ENCODE measurements at regions of chr5 and their contacts with region 1.

Region 1: DNA sequence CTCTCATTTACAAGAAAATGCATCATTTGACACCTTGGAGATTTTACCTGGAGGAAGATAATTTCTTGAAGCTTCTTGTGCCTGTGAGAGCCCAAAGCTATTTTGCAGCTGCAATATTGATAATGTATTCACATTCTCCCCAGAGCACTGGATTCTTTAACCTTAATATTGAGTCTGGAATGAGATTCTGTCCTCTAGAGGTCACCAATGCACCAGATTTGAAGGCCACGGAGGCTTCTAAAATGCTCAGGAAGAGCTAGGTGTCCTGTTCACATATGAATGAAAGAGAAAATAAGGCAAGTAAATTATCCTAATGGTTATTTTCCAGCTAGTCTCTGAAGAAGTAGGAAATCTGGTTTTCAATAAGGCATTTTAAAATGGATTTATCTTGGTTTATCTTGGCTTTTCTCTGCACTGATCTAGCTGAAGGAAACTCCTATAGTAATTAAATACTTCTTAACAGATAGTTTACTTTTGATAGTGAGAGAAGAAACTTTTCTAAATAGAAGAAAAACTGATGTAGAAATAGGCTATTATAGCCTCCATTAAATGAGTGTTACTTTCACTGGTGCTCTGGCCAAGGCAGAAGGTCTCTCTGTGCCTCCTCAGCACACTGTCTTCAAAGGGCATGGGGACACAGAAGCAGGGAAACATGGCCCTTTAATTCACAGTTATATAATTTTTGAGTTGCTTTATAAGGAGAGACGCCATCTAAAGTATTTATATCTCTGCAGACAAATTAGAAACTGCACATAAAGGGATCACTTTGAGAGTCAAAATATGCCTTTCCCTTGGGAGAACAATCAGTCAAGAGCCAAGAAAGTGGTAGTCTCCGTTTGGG is 297.0 kb upstream of the ACTBL2 start:
- DNase-seq: peak; percentile 42
- H3K4me3 ChIP-seq: peak overlapping the region in 1 of 2 experiments; percentile 29; a peak in 1 of 4 replicates
- H3K27ac ChIP-seq: peak overlapping the region; percentile 34 to 39
- H3K4me1 ChIP-seq: peaks cover 6 to 9% of the 10 kb centered on the region in 2 experiments; a peak in 3 of 4 replicates
- H3K27me3 ChIP-seq: no peaks in the 10 kb centered on the region
- CTCF ChIP-seq: peak; percentile 82
- EP300 ChIP-seq: no peak
- RAD21 ChIP-seq: peak; percentile 95

Region 2: GRCh38 chr5:57303985-57304384 is 475.6 kb before region 1 on chr5:
- CTCF ChIA-PET with region 1: interaction called, 51 read pairs
- POLR2A ChIA-PET with region 1: no interaction called
- DNase-seq: no peak
- H3K4me3 ChIP-seq: no peak overlapping the region
- H3K27ac ChIP-seq: no peak overlapping the region
- H3K4me1 ChIP-seq: peaks cover 0 to 2% of the 10 kb centered on the region in 2 experiments; a peak in 1 of 4 replicates
- H3K27me3 ChIP-seq: no peaks in the 10 kb centered on the region
- CTCF ChIP-seq: no peak
- EP300 ChIP-seq: no peak
- RAD21 ChIP-seq: 0 out of 2 replicates have a peak, but pooled peaks have one; percentile 12

Region 3: DNA sequence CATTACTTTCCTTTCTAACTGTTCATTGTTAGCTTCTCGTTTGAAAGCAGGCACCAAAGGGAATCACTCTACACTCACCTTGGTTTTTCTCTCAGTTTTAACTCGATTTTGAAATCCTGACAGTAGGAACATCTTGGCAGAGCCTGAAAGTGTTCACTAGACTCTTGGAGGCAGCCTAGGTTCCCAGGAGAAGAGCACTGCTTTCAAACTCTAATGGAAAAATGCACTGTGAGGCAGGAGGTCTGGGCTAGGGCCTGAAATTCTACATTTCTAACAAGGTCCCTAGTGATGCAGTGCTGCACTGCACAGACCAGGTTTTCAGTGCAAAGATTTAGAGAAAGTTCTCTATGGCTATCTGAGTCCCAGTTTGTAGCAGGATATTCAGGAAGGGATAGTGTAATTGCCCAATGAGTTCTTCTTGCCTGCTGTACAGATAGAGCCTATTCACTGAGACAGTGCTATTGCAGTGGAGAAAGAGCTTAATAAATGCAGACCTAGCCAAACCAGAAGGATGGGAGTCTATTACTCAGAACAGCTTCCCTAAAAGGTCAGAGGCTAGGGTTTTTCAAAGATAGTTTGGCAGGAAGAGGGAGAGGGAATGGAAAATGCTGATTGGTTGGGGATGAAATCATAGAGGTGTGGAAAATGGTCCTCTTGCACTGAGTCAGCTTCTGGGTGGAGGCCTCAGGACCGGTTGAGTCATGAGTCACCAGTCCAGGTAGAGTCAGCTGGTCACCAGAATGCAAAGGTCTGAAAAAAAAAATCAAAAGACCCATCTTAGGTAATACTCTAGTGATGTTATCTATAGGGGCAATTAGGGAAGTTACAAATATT is 451.8 kb before region 1 on chr5:
- CTCF ChIA-PET with region 1: no interaction called
- POLR2A ChIA-PET with region 1: no interaction called
- DNase-seq: no peak
- H3K4me3 ChIP-seq: no peak overlapping the region
- H3K27ac ChIP-seq: no peak overlapping the region
- H3K4me1 ChIP-seq: no peaks in the 10 kb centered on the region
- H3K27me3 ChIP-seq: no peaks in the 10 kb centered on the region
- CTCF ChIP-seq: no peak
- EP300 ChIP-seq: no peak
- RAD21 ChIP-seq: no peak

Region 4: GRCh38 chr5:57650360-57651069 is 129.1 kb before region 1 on chr5:
- CTCF ChIA-PET with region 1: interaction called, 18 read pairs
- POLR2A ChIA-PET with region 1: no interaction called
- DNase-seq: peak; percentile 5
- H3K4me3 ChIP-seq: no peak overlapping the region; a peak in 1 of 4 replicates
- H3K27ac ChIP-seq: no peak overlapping the region
- H3K4me1 ChIP-seq: no peaks in the 10 kb centered on the region
- H3K27me3 ChIP-seq: no peaks in the 10 kb centered on the region
- CTCF ChIP-seq: peak; percentile 65
- EP300 ChIP-seq: no peak
- RAD21 ChIP-seq: peak; percentile 63

Region 5: GRCh38 chr5:57878301-57878722 is 98.7 kb after region 1 on chr5:
- CTCF ChIA-PET with region 1: interaction called, 10 read pairs
- POLR2A ChIA-PET with region 1: no interaction called
- DNase-seq: no peak
- H3K4me3 ChIP-seq: no peak overlapping the region
- H3K27ac ChIP-seq: no peak overlapping the region
- H3K4me1 ChIP-seq: no peaks in the 10 kb centered on the region
- H3K27me3 ChIP-seq: no peaks in the 10 kb centered on the region
- CTCF ChIP-seq: no peak
- EP300 ChIP-seq: no peak
- RAD21 ChIP-seq: no peak

Region 6: GRCh38 chr5:58450811-58451629 is 671.4 kb after region 1 on chr5:
- CTCF ChIA-PET with region 1: interaction called, 13 read pairs
- POLR2A ChIA-PET with region 1: no interaction called
- DNase-seq: no peak
- H3K4me3 ChIP-seq: no peak overlapping the region
- H3K27ac ChIP-seq: no peak overlapping the region; a peak in 1 of 4 replicates
- H3K4me1 ChIP-seq: no peaks in the 10 kb centered on the region; a peak in 1 of 4 replicates
- H3K27me3 ChIP-seq: no peaks in the 10 kb centered on the region
- CTCF ChIP-seq: no peak
- EP300 ChIP-seq: no peak
- RAD21 ChIP-seq: no peak